ENCODE measurements at regions of chr3 and their contacts with region 1.

Region 1: DNA sequence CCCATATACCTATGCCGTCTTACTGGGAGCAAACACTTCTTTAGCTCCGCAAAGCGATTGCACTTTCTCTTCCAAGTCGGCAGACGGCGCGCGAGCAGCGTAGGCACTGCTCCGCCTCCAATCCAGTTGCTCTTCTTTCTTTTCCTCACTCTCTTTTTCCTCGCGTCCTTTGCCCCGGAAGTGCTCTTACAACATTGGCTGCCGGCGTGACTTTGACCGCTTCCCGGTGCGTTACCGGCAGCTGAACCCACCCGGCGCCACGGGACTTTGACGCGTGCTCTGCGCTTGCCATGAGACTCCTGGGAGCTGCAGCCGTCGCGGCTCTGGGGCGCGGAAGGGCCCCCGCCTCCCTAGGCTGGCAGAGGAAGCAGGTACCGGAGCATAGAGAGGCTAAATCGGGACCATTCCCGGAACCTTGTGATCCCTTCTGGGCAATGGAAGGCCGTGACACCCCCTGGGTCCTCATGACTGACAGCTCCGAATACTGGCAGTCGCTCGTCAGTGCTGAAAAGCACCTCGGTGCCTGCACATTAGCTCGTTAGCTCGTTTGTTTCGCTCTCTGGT is at the start of gene GFM1:
- DNase-seq: peak; percentile 75
- H3K4me3 ChIP-seq: peak within 1 kb of the TSS; percentile 95
- CTCF ChIP-seq: peak; percentile 94

Region 2: GRCh38 chr3:158570999-158571974 is 73.1 kb before region 1 on chr3 and contains the start of gene MLF1:
- CTCF ChIA-PET with region 1: interaction called, 17 read pairs
- POLR2A ChIA-PET with region 1: interaction called, 13 read pairs
- DNase-seq: peak; percentile 62
- H3K4me3 ChIP-seq: peak within 1 kb of the TSS; percentile 76
- CTCF ChIP-seq: no peak

Region 3: DNA sequence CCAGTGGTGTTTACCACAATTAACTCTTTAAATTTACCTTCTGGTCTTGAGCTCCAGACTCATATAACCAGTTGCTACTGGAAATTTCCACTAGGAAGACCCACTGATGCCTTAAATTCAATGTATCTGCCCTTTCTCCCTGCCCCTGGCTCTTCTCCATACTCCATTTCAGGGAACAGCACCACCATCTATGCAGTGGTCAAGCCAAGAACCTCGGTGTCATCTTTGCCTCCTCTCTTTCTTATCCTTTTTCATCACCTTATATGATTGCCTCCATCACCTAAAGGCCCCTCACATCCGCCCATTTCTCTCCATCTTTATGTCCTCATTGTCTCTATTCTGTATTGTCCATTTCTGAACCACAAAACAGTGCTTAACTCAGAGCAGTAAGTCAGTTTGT is 136.8 kb after region 1 on chr3:
- CTCF ChIA-PET with region 1: interaction called, 12 read pairs
- POLR2A ChIA-PET with region 1: interaction called, 3 read pairs
- DNase-seq: no peak
- H3K4me3 ChIP-seq: no peak overlapping the region
- CTCF ChIP-seq: no peak

Region 4: GRCh38 chr3:158801696-158802408 is 157.4 kb after region 1 on chr3 and contains the start of gene MFSD1:
- CTCF ChIA-PET with region 1: interaction called, 14 read pairs
- POLR2A ChIA-PET with region 1: no interaction called
- DNase-seq: peak; percentile 44
- H3K4me3 ChIP-seq: peak within 1 kb of the TSS; percentile 83
- CTCF ChIP-seq: no peak